ENCODE measurements at regions of chrX and their contacts with region 1.

Region 1: DNA sequence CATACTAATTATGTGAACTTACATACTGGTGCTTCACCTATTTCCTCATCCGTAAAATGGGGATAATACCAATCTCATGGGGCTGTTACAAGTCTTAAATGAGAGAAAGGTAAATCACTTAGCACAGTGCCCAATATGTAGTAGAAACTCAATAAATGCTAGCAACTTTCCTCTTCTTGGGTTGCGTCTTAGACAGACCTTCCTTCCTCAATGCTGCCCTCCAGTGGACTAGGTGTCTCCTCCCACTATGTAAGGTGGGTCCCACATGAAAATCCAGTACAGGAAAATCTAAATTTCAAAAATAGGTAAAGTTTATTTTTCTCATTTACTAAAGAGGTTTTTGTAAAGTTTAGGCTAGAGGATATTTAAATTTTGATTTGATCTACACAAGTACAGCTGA is 20.6 kb downstream of the ZDHHC9 start:
- DNase-seq: peak; percentile 61
- ATAC-seq: peak; percentile 73
- H3K4me3 Mint-ChIP-seq: no peak overlapping the region
- H3K27ac Mint-ChIP-seq: peak overlapping the region; percentile 88
- H3K4me1 Mint-ChIP-seq: peaks cover 13% of the 10 kb centered on the region
- H3K27me3 Mint-ChIP-seq: no peaks in the 10 kb centered on the region
- CTCF ChIP-seq: peak; percentile 68

Region 2: DNA sequence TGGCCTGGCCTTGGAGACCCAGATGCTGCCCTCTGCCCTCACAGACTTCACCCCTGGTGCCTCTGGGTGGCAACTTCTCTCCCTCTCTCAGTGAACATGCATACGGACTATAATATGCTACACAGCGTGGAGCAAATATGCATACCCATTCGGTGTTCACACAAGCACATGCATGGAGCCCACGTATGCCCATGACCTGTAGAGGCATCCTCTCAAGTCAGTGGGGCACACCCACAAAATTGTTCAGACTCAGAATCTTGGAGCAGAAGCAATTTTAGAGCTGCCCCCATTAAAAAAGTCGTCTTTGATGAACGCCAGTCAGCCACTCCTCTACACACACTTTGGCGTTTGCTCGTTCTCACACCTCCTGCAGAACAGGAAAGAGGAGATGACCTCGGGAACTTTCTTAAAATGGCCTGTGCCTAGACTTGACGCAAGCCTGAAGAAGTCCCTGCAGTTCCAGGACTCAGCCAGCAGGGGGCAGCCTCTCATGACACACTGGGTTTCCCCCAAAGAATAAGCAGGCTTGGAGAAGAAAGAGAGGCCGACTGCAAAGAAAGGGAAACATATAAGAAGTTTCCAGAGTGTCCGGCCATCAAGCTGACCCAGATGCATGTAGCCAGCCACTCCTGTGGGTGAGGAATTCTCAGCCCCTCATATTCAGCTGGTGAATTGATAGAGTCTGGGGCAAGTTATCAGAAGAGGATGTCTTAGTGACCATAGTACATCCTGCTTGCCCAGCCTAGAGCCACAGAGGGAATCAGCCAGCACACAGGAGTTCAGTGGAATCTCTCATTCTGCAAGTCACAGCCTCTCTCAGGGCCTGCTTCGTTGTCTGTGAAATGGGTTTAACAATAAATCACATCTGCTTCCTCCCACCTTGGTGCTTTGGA is 185.7 kb before region 1 on chrX:
- CTCF ChIA-PET with region 1: interaction called, 10 read pairs
- POLR2A ChIA-PET with region 1: no interaction called
- intact Hi-C with region 1: loop called (anchors 10 kb)
- DNase-seq: peak; percentile 78
- ATAC-seq: peak; percentile 87
- H3K4me3 Mint-ChIP-seq: no peak overlapping the region
- H3K27ac Mint-ChIP-seq: peak overlapping the region; percentile 42
- H3K4me1 Mint-ChIP-seq: peaks cover 2% of the 10 kb centered on the region
- H3K27me3 Mint-ChIP-seq: no peaks in the 10 kb centered on the region
- CTCF ChIP-seq: peak; percentile 76

Region 3: DNA sequence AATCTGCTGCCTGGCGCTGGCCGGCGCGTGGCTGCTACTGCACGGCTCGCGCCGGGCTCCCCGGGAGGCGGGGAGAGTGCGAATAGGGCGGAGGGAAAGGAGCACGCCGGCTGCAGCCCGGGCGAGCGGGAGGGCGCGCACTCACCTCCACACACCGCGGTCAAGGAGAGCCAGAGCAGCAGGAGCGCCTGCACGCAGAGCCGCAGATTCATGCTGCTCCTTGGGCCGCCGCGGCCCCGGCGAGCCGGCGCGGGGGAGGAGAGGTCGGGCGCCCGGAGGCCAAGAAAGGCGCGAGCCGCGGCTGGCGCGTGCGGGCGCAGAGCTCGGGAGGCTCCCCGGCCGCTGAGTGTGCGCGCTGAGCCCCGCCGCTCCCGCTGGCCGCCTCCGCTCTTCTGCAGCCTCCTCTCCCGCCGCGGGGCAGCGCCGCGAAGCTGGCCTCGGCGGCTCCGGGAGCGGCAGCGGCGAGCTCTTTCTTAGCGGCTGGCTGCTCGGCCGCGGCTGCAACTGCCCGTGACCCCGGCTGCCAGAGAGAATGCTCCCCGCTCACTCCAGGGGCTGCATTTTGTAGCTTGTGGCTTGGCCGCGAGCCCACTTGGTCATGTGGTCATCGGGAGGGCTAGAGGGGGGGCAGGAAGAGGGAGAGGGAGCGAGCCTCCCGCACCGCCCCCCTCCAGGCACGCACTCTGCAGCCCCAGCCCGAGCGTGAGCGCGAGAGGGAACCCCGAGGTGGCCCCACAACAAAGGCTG is 168.5 kb before region 1 on chrX and contains the start of gene APLN:
- CTCF ChIA-PET with region 1: interaction called, 3 read pairs
- POLR2A ChIA-PET with region 1: no interaction called
- intact Hi-C with region 1: loop called (anchors 5 kb)
- DNase-seq: peak; percentile 19
- ATAC-seq: peak; percentile 73
- H3K4me3 Mint-ChIP-seq: peak within 1 kb of the TSS; percentile 66
- H3K27ac Mint-ChIP-seq: no peak within 1 kb of the TSS
- H3K4me1 Mint-ChIP-seq: peaks cover 3% of the 10 kb centered on the region
- H3K27me3 Mint-ChIP-seq: peaks cover 10% of the 10 kb centered on the region
- CTCF ChIP-seq: no peak
- total RNA-seq, gene APLN: 3.5 TPM

Region 4: DNA sequence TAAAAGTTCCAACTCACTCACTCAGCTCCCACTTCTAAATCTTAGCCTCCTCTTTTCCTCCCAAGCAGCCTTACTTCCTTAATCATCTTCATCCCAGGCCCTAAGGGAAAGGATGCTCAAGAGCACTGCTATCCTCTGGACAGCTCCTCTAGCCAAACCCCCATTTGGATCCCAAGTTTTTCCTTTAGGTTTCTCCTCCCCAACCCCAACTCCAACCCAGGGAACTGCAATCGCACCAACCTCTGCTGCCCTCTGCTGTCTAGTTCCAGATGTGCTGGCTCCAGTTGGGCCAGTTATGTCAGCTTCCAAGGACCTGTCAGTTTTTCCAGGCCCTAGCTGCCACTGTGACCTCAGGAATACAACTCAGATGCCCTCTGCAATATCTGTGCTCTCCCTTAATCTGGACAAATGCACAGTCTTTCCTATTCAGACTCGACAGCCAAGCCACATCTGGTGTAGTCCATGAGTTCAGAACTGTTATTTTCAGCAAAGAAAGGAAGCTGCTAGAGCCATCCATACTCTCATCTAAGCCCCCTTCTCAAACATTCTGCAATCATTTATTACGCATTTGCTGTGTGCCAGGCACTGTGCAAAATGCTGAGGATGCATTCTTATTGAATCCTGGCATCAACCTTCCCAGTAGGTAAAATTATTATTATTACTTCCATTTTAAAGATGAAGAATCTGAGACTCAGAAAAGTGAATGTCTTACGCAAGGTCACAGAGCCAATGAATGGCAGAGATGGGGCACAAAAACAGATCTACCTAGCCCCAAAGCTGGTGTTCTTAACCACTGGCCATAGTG is 96.6 kb before region 1 on chrX:
- CTCF ChIA-PET with region 1: interaction called, 18 read pairs
- POLR2A ChIA-PET with region 1: no interaction called
- intact Hi-C with region 1: no loop called
- DNase-seq: peak; percentile 45
- ATAC-seq: peak; percentile 27
- H3K4me3 Mint-ChIP-seq: no peak overlapping the region
- H3K27ac Mint-ChIP-seq: no peak overlapping the region
- H3K4me1 Mint-ChIP-seq: peaks cover 25% of the 10 kb centered on the region
- H3K27me3 Mint-ChIP-seq: no peaks in the 10 kb centered on the region
- CTCF ChIP-seq: peak; percentile 61

Region 5: DNA sequence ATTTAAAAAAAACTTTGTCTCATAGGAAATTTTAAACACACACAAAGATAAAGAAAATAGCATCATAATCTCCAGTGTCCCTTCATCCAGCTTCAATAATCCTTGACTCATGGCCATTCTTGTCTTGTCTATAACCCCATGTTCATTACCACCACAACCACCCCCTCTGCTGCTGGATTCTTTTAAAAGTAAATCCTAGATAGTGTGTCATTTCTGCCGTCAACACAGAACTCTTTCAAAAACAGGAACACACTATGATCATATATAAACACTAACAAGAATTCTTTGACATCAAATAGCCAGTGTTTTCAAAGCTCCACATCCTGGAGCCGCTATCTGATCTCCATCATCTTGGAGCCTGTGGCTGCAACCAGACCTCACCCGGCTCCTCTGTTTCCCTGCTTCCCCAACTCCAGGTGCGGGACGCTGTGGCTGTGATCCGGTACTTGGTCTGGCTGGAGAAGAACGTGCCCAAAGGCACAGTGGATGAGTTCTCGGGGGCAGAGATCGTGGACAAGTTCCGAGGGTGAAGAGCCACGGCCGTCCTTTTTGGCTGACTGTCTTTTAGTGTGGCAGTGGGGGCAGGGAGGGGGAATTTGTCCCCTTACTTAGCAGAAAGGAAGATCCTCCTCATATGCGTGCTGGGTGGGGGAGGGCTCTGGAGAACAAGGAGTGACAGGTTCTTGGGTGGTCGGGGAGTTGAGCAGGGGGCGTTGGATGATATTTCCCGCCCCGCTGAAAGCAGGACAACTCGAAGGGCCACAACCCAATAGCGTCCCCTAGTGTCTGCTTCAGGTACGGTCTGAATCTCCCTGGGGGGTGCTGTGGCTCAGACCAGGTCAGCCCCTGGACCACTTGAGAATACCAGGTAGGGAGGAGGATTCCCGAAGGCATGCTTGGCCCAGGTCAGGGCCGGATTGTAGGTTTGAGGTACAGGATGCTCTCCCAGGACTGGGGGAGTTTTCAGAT is 68.8 kb before region 1 on chrX:
- CTCF ChIA-PET with region 1: interaction called, 26 read pairs
- POLR2A ChIA-PET with region 1: interaction called, 4 read pairs
- intact Hi-C with region 1: loop called (anchors 10 kb)
- DNase-seq: peak; percentile 38
- ATAC-seq: no peak
- H3K4me3 Mint-ChIP-seq: no peak overlapping the region
- H3K27ac Mint-ChIP-seq: no peak overlapping the region
- H3K4me1 Mint-ChIP-seq: peaks cover 43% of the 10 kb centered on the region
- H3K27me3 Mint-ChIP-seq: no peaks in the 10 kb centered on the region
- CTCF ChIP-seq: peak; percentile 61

Region 6: GRCh38 chrX:129759576-129760061 is 63.5 kb before region 1 on chrX:
- CTCF ChIA-PET with region 1: interaction called, 26 read pairs
- POLR2A ChIA-PET with region 1: interaction called, 4 read pairs
- intact Hi-C with region 1: loop called (anchors 10 kb)
- DNase-seq: peak; percentile 77
- ATAC-seq: peak; percentile 75
- H3K4me3 Mint-ChIP-seq: peak overlapping the region; percentile 19
- H3K27ac Mint-ChIP-seq: peak overlapping the region; percentile 85
- H3K4me1 Mint-ChIP-seq: peaks cover 61% of the 10 kb centered on the region
- H3K27me3 Mint-ChIP-seq: no peaks in the 10 kb centered on the region
- CTCF ChIP-seq: no peak

Region 7: DNA sequence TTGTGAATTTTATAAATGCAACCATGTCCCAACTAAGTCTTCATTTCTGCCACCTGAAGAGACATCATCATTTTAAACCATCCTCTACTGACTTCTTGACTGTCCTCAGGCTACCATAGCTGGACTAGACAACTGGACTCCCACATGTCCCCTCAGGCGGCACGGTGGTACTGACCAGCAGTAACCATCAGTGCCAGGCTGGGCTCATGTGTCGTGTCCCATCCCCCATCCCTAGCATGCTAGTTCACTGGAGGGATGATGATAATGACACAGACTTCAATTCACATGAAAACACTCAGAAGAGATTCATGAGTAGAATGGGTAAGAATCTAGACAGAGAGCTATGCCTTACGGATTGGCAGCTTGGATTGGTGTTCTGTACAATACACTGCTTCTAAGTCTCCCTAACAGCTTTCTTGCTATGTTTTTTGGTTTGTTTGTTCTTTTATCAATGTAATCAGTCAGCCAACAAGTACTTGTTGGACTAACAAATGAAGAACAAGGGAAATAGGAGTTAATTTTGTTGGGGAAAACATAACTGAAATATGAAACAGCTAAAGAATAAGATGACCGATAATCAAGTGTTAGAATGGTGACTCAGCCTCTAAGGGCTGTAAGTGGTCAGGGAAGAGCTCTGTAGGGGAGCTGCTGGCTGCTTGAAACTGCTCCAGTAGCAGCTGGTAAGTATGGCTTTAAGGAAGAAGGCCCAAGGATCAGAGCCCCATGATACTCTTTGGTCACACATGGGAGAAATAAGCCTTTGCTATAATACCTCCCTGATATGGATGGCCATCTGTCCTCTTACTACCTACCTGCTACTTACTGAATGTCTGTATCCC is 10.3 kb after region 1 on chrX:
- CTCF ChIA-PET with region 1: interaction called, 11 read pairs
- POLR2A ChIA-PET with region 1: no interaction called
- intact Hi-C with region 1: no loop called
- DNase-seq: no peak
- ATAC-seq: no peak
- H3K4me3 Mint-ChIP-seq: no peak overlapping the region
- H3K27ac Mint-ChIP-seq: no peak overlapping the region
- H3K4me1 Mint-ChIP-seq: no peaks in the 10 kb centered on the region
- H3K27me3 Mint-ChIP-seq: no peaks in the 10 kb centered on the region
- CTCF ChIP-seq: no peak

Region 8: GRCh38 chrX:129900054-129900453 is 76.9 kb after region 1 on chrX:
- CTCF ChIA-PET with region 1: no interaction called
- POLR2A ChIA-PET with region 1: no interaction called
- intact Hi-C with region 1: no loop called
- DNase-seq: no peak
- ATAC-seq: no peak
- H3K4me3 Mint-ChIP-seq: no peak overlapping the region
- H3K27ac Mint-ChIP-seq: no peak overlapping the region
- H3K4me1 Mint-ChIP-seq: peaks cover 4% of the 10 kb centered on the region
- H3K27me3 Mint-ChIP-seq: no peaks in the 10 kb centered on the region
- CTCF ChIP-seq: no peak

Region 9: GRCh38 chrX:129931411-129932015 is 108.4 kb after region 1 on chrX:
- CTCF ChIA-PET with region 1: no interaction called
- POLR2A ChIA-PET with region 1: no interaction called
- intact Hi-C with region 1: no loop called
- DNase-seq: peak; percentile 68
- ATAC-seq: peak; percentile 70
- H3K4me3 Mint-ChIP-seq: peak overlapping the region; percentile 69
- H3K27ac Mint-ChIP-seq: peak overlapping the region; percentile 64
- H3K4me1 Mint-ChIP-seq: peaks cover 5% of the 10 kb centered on the region
- H3K27me3 Mint-ChIP-seq: peaks cover 3% of the 10 kb centered on the region
- CTCF ChIP-seq: no peak

Measured in activated CD8-positive, alpha-beta T cell treated with anti-CD3 and anti-CD28 coated beads for 36 hours (primary cell).